Activated CD8-positive, alpha-beta memory T cell treated with anti-CD3 and anti-CD28 coated beads, Interleukin-2, amount 10 ng/mL, durations not matched to agents 7 days and 5 days (primary cell): ENCODE measurements at regions of chr20 and their contacts with region 1.

Region 1: GRCh38 chr20:50070991-50071888 is 41.7 kb downstream of the UBE2V1 start:
- DNase-seq: peak; percentile 91
- ATAC-seq: peak; percentile 99
- H3K4me3 Mint-ChIP-seq: peak overlapping the region; percentile 59
- H3K27ac Mint-ChIP-seq: no peak overlapping the region
- H3K4me1 Mint-ChIP-seq: peaks cover 4% of the 10 kb centered on the region
- H3K27me3 Mint-ChIP-seq: peaks cover 4% of the 10 kb centered on the region

Region 2: GRCh38 chr20:49964964-49965780 is 106.1 kb before region 1 on chr20:
- CTCF ChIA-PET with region 1: interaction called, 481 read pairs
- DNase-seq: no peak
- ATAC-seq: no peak
- H3K4me3 Mint-ChIP-seq: no peak overlapping the region
- H3K27ac Mint-ChIP-seq: no peak overlapping the region
- H3K4me1 Mint-ChIP-seq: no peaks in the 10 kb centered on the region
- H3K27me3 Mint-ChIP-seq: no peaks in the 10 kb centered on the region

Region 3: GRCh38 chr20:49999329-49999728 is 71.9 kb before region 1 on chr20:
- CTCF ChIA-PET with region 1: interaction called, 12 read pairs
- DNase-seq: no peak
- ATAC-seq: no peak
- H3K4me3 Mint-ChIP-seq: no peak overlapping the region
- H3K27ac Mint-ChIP-seq: no peak overlapping the region
- H3K4me1 Mint-ChIP-seq: peaks cover 22% of the 10 kb centered on the region
- H3K27me3 Mint-ChIP-seq: peaks cover 11% of the 10 kb centered on the region

Region 4: GRCh38 chr20:50095476-50096078 is 24.3 kb after region 1 on chr20:
- CTCF ChIA-PET with region 1: interaction called, 25 read pairs
- DNase-seq: no peak
- ATAC-seq: no peak
- H3K4me3 Mint-ChIP-seq: no peak overlapping the region
- H3K27ac Mint-ChIP-seq: no peak overlapping the region
- H3K4me1 Mint-ChIP-seq: peaks cover 44% of the 10 kb centered on the region
- H3K27me3 Mint-ChIP-seq: no peaks in the 10 kb centered on the region

Region 5: DNA sequence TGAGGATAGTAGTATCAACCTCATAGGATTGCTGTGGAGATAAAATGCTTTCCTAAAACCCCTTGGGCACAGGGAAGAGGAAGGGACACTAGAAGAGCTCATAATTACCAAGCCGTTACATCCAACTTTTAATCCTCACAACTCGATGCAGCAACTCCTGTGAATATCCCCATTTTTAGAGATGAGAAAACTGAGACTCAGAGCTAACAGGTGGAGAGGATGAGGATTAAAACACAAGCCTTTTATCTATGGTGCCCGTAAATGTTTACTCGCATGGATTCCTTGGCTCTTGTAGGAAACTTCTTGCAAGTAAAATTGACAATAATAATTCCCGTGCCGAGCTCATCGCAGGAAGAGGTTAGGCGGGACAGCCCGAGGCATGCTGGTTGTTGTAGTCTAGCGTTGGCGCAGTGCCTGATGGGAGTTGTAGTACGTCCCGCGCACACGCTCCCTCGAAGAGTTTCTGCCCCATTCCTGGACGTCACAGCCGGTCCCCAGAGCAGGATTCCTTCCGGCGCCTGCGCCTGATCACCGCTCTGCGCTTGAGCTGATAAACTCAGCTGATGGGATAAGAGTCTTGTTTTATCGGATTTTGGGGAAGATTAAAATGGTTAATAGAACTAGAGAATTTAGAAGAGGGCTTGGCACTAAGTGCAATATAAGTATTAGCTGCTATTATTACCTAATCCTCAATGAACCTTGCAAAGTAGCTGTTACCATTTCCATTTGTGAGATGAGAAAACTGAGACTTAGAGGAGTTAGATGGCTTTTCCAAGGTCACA is 44.5 kb after region 1 on chr20:
- CTCF ChIA-PET with region 1: interaction called, 15 read pairs
- DNase-seq: peak; percentile 95
- ATAC-seq: peak; percentile 77
- H3K4me3 Mint-ChIP-seq: peak overlapping the region; percentile 82
- H3K27ac Mint-ChIP-seq: peak overlapping the region; percentile 86
- H3K4me1 Mint-ChIP-seq: peaks cover 44% of the 10 kb centered on the region
- H3K27me3 Mint-ChIP-seq: no peaks in the 10 kb centered on the region

Region 6: GRCh38 chr20:50179507-50180016 is 108.3 kb after region 1 on chr20:
- CTCF ChIA-PET with region 1: interaction called, 37 read pairs
- DNase-seq: no peak
- ATAC-seq: no peak
- H3K4me3 Mint-ChIP-seq: no peak overlapping the region
- H3K27ac Mint-ChIP-seq: no peak overlapping the region
- H3K4me1 Mint-ChIP-seq: no peaks in the 10 kb centered on the region
- H3K27me3 Mint-ChIP-seq: peaks cover 12% of the 10 kb centered on the region